HEK293 (cell line): ENCODE measurements at regions of chr7 and their contacts with region 1.

Region 1: GRCh38 chr7:91880413-91881241 is at the start of gene MTERF1:
- H3K4me3 ChIP-seq: peak within 1 kb of the TSS; percentile 72
- H3K27ac ChIP-seq: peak within 1 kb of the TSS; percentile 1; the same call in 1 of the 2 replicates
- H3K4me1 ChIP-seq: peaks cover 14% of the 10 kb centered on the region
- CTCF ChIP-seq: peak; percentile 99

Region 2: DNA sequence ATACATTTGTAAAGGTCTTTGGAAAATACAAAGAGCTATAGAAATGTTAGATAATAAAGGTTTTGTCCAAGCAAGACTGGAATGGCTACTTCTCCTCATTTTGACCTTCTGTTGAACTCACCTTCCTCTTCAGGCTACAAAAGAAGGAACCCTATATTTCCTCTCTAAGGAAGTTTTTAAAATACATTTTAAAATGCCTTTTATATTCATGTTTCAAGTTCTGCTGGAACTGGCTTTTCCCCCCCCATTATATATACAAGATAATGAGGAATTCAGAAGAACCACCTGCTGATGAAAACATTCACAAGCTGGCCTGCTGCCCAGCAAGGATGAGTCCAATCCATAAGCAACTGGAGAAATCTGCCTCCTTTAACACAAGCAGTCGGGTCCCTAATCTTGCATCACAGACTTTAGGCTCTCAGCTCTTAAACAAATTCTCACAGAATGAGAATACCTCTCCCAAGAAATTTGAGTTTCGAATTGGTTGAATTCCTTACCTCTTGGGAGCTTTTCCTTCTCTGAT is 44.7 kb before region 1 on chr7:
- CTCF ChIA-PET with region 1: interaction called, 15 read pairs
- POLR2A ChIA-PET with region 1: no interaction called
- H3K4me3 ChIP-seq: no peak overlapping the region
- H3K27ac ChIP-seq: no peak overlapping the region
- H3K4me1 ChIP-seq: peaks cover 6% of the 10 kb centered on the region; the same call in 1 of the 2 replicates
- CTCF ChIP-seq: no peak

Region 3: GRCh38 chr7:91892099-91892705 is 11.6 kb after region 1 on chr7:
- CTCF ChIA-PET with region 1: interaction called, 20 read pairs
- POLR2A ChIA-PET with region 1: no interaction called
- H3K4me3 ChIP-seq: no peak overlapping the region
- H3K27ac ChIP-seq: peak overlapping the region; percentile 34
- H3K4me1 ChIP-seq: peaks cover 12% of the 10 kb centered on the region
- CTCF ChIP-seq: no peak

Region 4: GRCh38 chr7:91940572-91941341 is 60.1 kb after region 1 on chr7 and contains the start of gene AKAP9:
- CTCF ChIA-PET with region 1: interaction called, 30 read pairs
- POLR2A ChIA-PET with region 1: interaction called, 10 read pairs
- H3K4me3 ChIP-seq: peak within 1 kb of the TSS; percentile 61
- H3K27ac ChIP-seq: peak within 1 kb of the TSS; percentile 89
- H3K4me1 ChIP-seq: peaks cover 7% of the 10 kb centered on the region; the same call in 1 of the 2 replicates
- CTCF ChIP-seq: no peak

Region 5: DNA sequence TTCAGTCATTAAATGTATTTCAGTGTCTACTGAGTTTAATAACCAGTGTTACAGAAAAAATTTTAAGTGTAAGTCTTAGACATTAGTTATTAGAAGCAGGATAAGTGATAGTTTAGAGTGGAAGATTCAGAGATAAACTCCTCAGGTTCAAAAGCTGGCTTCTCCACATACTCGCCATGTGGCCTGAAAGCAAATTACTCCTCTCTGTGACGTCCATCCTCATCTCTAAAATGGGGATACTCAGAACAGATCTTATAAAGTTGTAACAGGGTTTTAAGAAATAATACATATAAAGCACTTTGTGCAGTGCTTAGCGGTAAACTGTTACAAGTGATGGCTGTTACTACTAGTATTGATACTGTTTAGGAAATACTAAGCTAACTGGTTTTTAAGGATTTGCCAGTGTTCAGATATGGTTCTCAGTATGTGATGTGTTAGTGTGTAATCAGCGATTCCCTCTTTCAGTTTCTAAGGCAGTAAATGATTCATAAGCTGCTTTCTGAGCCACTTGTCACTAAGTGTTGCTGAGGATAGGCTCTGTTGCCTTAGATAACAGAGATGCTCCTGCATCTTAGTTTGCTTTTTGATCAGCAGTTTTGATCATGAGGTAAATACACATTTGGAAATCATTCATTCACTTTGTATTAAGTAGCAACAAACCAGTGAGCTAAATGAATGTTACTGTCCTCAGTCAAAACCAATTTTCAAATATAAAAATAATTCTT is 195.0 kb after region 1 on chr7:
- CTCF ChIA-PET with region 1: no interaction called
- POLR2A ChIA-PET with region 1: no interaction called
- H3K4me3 ChIP-seq: no peak overlapping the region
- H3K27ac ChIP-seq: no peak overlapping the region
- H3K4me1 ChIP-seq: no peaks in the 10 kb centered on the region
- CTCF ChIP-seq: no peak